ENCODE measurements at regions of chr2 and their contacts with region 1.

Region 1: GRCh38 chr2:20350753-20351554 is at the start of gene PUM2:
- DNase-seq: peak; percentile 87 to 99 (median 94)
- ATAC-seq: peak; percentile 79
- H3K4me3 ChIP-seq: peak within 1 kb of the TSS; percentile 77
- H3K4me3 Mint-ChIP-seq: peak within 1 kb of the TSS; percentile 88
- H3K27ac ChIP-seq: peak within 1 kb of the TSS; percentile 83 to 94
- H3K27ac Mint-ChIP-seq: no peak within 1 kb of the TSS
- H3K4me1 ChIP-seq: peaks cover 41% of the 10 kb centered on the region
- H3K4me1 Mint-ChIP-seq: peaks cover 39% of the 10 kb centered on the region
- H3K27me3 ChIP-seq: no peaks in the 10 kb centered on the region
- H3K27me3 Mint-ChIP-seq: no peaks in the 10 kb centered on the region
- CTCF ChIP-seq: peak; percentile 32
- total RNA-seq, gene PUM2: 94.9 to 95.4 TPM

Region 2: GRCh38 chr2:18560031-18560796 is 1790.7 kb before region 1 on chr2 and contains the start of gene RDH14:
- CTCF ChIA-PET with region 1: no interaction called
- POLR2A ChIA-PET with region 1: no interaction called
- intact Hi-C with region 1: loop called in 1 of 2 experiments (anchors 10 kb)
- DNase-seq: peak; percentile 84 to 95 (median 91)
- ATAC-seq: peak; percentile 89
- H3K4me3 ChIP-seq: peak within 1 kb of the TSS; percentile 55
- H3K4me3 Mint-ChIP-seq: peak within 1 kb of the TSS; percentile 97
- H3K27ac ChIP-seq: peak within 1 kb of the TSS; percentile 79 to 88
- H3K27ac Mint-ChIP-seq: peak within 1 kb of the TSS; percentile 93
- H3K4me1 ChIP-seq: peaks cover 13% of the 10 kb centered on the region
- H3K4me1 Mint-ChIP-seq: peaks cover 57% of the 10 kb centered on the region
- H3K27me3 ChIP-seq: no peaks in the 10 kb centered on the region
- H3K27me3 Mint-ChIP-seq: no peaks in the 10 kb centered on the region
- CTCF ChIP-seq: no peak
- total RNA-seq, gene RDH14: 11.4 to 12.7 TPM

Region 3: GRCh38 chr2:19989681-19990415 is 361.1 kb before region 1 on chr2 and contains the start of gene WDR35:
- CTCF ChIA-PET with region 1: no interaction called
- POLR2A ChIA-PET with region 1: no interaction called
- intact Hi-C with region 1: loop called in 1 of 2 experiments (anchors 5 kb)
- DNase-seq: peak; percentile 76 to 93 (median 87)
- ATAC-seq: peak; percentile 91
- H3K4me3 ChIP-seq: peak within 1 kb of the TSS; percentile 90
- H3K4me3 Mint-ChIP-seq: peak within 1 kb of the TSS; percentile 93
- H3K27ac ChIP-seq: peak within 1 kb of the TSS; percentile 65 to 71
- H3K27ac Mint-ChIP-seq: peak within 1 kb of the TSS; percentile 82
- H3K4me1 ChIP-seq: peaks cover 14% of the 10 kb centered on the region
- H3K4me1 Mint-ChIP-seq: peaks cover 20% of the 10 kb centered on the region
- H3K27me3 ChIP-seq: peaks cover 0 to 11% of the 10 kb centered on the region in 2 experiments
- H3K27me3 Mint-ChIP-seq: peaks cover 23% of the 10 kb centered on the region
- CTCF ChIP-seq: no peak
- total RNA-seq, gene WDR35: 2.8 to 3.2 TPM

Region 4: DNA sequence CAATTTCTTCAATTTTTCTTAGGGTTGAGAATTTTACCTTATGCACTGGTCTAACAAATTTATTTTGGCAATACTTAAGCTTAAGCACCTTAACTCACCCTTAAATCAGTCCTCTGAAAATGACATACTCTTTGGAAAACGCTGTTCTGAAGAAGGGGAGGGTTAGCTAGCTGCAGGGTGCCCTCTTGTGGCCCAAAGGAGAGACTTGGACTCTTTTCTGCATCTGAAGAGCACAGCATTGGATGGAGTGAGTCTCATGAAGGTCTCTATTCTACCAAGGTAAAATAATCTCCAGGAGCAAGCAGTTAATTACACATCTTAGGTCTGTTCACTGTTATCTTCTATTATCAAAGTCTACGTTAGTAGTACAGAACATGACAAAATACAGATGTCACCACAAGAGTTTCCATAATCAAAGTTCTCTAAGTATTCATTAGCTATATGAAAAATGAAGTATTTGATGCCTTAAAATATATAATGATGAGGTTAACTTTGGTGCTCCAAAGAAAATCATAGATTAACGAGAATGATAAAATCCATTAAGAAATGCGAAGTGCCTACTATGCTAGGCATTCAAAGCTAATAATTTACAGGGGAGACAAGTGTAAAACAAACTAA is 24.7 kb before region 1 on chr2:
- CTCF ChIA-PET with region 1: interaction called, 18 read pairs
- POLR2A ChIA-PET with region 1: interaction called, 12 read pairs
- intact Hi-C with region 1: loop called (anchors 1 to 2 kb)
- DNase-seq: peak; percentile 14 to 76 (median 43)
- ATAC-seq: peak; percentile 90
- H3K4me3 ChIP-seq: no peak overlapping the region
- H3K4me3 Mint-ChIP-seq: no peak overlapping the region
- H3K27ac ChIP-seq: no peak overlapping the region
- H3K27ac Mint-ChIP-seq: peak overlapping the region; percentile 19
- H3K4me1 ChIP-seq: peaks cover 10% of the 10 kb centered on the region
- H3K4me1 Mint-ChIP-seq: peaks cover 72% of the 10 kb centered on the region
- H3K27me3 ChIP-seq: no peaks in the 10 kb centered on the region
- H3K27me3 Mint-ChIP-seq: no peaks in the 10 kb centered on the region
- CTCF ChIP-seq: peak; percentile 77

Region 5: DNA sequence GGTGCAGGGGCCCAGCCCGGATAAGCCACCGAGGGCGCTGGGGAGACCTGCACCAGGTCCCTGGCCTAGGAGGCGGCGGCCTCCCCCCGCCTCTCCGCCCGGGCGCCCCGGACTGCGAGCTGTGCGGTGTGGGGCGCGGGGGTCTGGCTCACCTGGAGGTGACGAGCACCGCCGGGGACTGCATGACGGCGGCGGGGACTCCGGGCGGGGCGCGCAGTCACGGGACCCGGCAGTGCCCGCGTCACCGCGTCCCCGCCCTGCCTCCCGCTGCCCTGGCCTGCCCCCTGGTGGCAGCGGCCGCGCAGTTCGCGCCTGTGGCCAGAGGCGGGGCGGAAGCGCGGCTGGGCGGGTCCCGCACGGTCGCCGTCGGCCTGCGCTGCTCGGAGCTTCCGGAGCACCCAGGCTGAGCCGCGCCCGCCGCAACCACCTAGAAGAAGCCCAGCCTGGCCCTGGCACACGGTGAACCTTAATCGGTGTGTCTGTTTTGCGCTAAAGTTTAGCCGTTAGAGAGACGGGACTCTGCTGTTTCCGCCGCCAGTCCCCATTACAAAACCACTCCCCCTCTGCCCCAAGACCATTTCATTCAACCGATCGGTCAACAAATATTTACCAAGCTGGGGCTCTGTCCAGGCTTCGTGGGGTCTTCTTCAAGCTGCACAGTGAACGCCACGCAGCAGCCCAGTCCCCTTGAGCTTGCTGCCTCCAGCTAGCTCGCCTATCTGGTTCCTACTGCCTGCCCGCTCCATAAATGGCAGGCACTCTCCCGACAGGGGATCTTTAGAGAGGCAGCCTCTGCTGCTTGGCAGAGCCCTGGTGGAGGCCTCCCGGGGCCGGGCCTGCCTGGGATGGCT is 300.2 kb after region 1 on chr2 and contains the start of gene HS1BP3:
- CTCF ChIA-PET with region 1: interaction called, 10 read pairs
- POLR2A ChIA-PET with region 1: interaction called, 6 read pairs
- intact Hi-C with region 1: loop called in 1 of 2 experiments (anchors 5 kb)
- DNase-seq: peak; percentile 77 to 97 (median 87)
- ATAC-seq: peak; percentile 90
- H3K4me3 ChIP-seq: peak within 1 kb of the TSS; percentile 96
- H3K4me3 Mint-ChIP-seq: peak within 1 kb of the TSS; percentile 94
- H3K27ac ChIP-seq: peak within 1 kb of the TSS; percentile 82 to 92
- H3K27ac Mint-ChIP-seq: peak within 1 kb of the TSS; percentile 89
- H3K4me1 ChIP-seq: peaks cover 28% of the 10 kb centered on the region
- H3K4me1 Mint-ChIP-seq: peaks cover 37% of the 10 kb centered on the region
- H3K27me3 ChIP-seq: no peaks in the 10 kb centered on the region
- H3K27me3 Mint-ChIP-seq: no peaks in the 10 kb centered on the region
- CTCF ChIP-seq: peak; percentile 69
- total RNA-seq, gene HS1BP3: 8.8 to 10.1 TPM

Measured in CD4-positive, alpha-beta T cell (primary cell).